Heart right ventricle (tissue), 16 donors: ENCODE measurements at regions of chr7 and their contacts with region 1.

Region 1: GRCh38 chr7:131556052-131556908 is at the start of gene PODXL:
- DNase-seq: peak; percentile 71 to 86
- ATAC-seq: peak; percentile 66 to 89 (median 82)
- H3K4me3 ChIP-seq: peak within 1 kb of the TSS; percentile 64 to 95 (median 83)
- H3K27ac ChIP-seq: peak within 1 kb of the TSS; percentile 70 to 98 (median 92)
- H3K4me1 ChIP-seq: peaks cover 6 to 69% (median 32%) of the 10 kb centered on the region in 9 donors
- H3K27me3 ChIP-seq: peaks cover 0 to 50% (median 0%) of the 10 kb centered on the region in 7 donors
- CTCF ChIP-seq: peak in 5 of 9 donors; percentile 7 to 34 (median 14)
- total RNA-seq, gene PODXL: 43.7 to 162 (median 71.0) TPM

Region 2: DNA sequence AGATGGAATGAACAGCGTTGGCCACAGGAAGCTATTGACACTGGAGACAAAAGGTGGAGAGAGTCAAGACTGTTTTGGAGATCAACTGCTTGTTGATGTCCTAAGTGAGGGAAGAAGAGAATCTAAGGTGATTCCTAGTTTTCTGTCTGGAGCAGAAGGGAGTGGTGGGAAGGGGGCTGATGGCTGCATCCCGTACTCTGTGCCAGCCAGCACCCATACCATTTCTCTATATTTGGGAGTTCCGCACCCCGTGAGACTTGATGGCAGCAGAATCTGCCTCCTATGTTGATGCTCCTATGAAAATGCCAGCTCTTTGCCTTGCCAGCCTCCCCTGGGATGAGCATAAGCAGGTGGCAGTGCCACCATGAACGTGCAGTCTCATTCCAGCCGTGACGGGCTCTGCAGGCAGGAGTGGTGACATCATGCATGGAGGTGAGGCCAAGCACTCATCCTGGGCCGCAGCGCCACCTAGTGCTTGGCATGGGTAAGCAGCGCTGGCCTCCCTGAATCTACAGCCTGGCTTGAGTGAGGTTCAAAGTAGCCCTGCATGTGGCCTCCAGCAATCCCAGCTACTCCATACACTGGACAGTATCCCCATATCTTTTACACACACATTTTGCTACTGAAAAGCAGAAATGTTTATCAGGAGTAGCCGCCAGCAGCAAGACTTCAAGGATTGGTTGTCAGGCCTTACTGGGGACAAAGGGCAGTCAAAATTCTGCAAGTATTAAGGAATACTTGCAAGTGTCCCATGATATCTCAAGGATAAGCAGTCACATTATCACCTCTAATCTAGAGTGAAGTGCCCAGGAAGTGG is 42.8 kb before region 1 on chr7:
- intact Hi-C with region 1: loop called in 2 of 10 experiments (anchors 5 kb)
- DNase-seq: peak; percentile 85 to 86
- ATAC-seq: peak; percentile 85 to 93 (median 91)
- H3K4me3 ChIP-seq: no peak overlapping the region
- H3K27ac ChIP-seq: peak overlapping the region in 9 of 10 donors; percentile 3 to 82 (median 50)
- H3K4me1 ChIP-seq: peaks cover 13 to 81% (median 46%) of the 10 kb centered on the region in 9 donors
- H3K27me3 ChIP-seq: no peaks in the 10 kb centered on the region
- CTCF ChIP-seq: peak; percentile 85 to 99 (median 96)

Region 3: DNA sequence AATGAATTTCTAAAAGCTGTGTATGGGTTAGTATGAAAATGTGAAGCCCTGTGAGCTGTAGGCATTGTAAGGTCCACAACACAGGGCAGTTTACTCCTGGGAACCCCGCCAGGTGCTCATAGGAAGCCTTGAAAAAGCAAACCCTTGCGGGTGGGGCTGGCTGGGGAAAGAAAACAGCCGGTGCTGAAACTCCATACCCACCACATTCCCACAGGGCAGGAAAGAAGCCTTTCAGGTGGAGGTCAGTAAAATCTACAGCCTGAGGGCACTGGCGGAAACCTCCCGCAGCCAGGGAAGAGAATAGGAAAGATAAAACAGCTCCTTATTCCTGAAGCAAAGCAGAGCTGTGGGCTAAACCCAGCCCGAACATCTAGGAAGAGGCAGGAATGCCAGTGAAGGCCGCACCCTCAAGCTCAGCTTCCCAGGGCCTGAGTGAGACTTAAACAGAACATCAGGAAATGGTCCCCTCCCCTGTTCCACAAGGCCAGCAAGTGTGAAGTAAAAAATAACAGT is 34.6 kb before region 1 on chr7:
- intact Hi-C with region 1: loop called in 1 of 10 experiments (anchors 5 kb)
- DNase-seq: peak; percentile 56 to 66
- ATAC-seq: peak; percentile 48 to 78 (median 66)
- H3K4me3 ChIP-seq: peak overlapping the region in 4 of 10 donors; percentile 20 to 21 (median 20)
- H3K27ac ChIP-seq: peak overlapping the region; percentile 65 to 89 (median 73)
- H3K4me1 ChIP-seq: peaks cover 4 to 98% (median 49%) of the 10 kb centered on the region in 9 donors
- H3K27me3 ChIP-seq: no peaks in the 10 kb centered on the region
- CTCF ChIP-seq: no peak

Region 4: DNA sequence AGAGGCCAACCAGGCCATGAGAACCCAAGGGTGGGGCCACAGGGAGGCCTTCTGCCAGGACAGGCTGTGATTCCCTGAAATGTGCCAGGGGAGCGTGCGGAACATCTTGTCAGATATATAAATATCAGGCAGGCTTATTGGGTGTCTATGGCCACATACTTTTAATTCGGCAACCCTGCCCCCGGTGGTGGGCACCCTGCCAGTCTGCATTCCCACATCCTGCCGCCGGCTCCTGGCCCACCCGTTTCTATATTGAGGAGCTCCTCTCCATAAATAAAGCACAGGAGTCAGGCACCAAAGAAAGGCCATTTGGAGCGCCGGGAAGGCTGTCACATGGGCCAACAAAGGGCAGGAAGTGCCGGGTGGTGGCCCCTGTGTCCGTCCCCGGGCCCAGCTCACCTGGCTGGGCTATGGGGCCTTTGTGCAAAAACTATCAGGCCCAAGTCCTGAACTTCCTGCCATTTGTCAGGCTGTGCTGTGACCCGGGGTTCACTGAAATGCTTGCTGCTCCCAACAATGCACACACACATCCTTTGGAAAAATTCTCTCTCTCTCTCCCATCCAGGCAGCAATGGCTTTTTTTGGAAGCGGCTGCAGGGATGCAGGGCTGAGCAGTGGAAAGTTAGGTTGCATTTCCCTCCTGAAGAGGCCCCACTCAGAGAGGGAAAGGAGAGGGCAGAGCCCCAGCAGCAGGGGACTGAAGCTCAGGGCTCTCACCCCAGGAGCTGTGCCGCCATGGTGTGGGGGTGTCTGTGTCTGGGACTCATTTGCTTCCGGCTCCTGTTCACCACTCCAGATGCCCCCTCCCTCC is 25.2 kb after region 1 on chr7:
- intact Hi-C with region 1: loop called in 3 of 10 experiments (anchors 1 to 2 kb)
- DNase-seq: peak; percentile 83 to 84
- ATAC-seq: peak; percentile 78 to 94 (median 91)
- H3K4me3 ChIP-seq: no peak overlapping the region
- H3K27ac ChIP-seq: peak overlapping the region; percentile 68 to 91 (median 86)
- H3K4me1 ChIP-seq: peaks cover 4 to 38% (median 28%) of the 10 kb centered on the region in 9 donors
- H3K27me3 ChIP-seq: no peaks in the 10 kb centered on the region
- CTCF ChIP-seq: peak in 8 of 9 donors; percentile 4 to 48 (median 24)

Region 5: GRCh38 chr7:131625817-131626372 is 69.6 kb after region 1 on chr7:
- intact Hi-C with region 1: loop called in 2 of 10 experiments (anchors 2 to 5 kb)
- DNase-seq: peak; percentile 53 to 73
- ATAC-seq: peak; percentile 23 to 64 (median 44)
- H3K4me3 ChIP-seq: no peak overlapping the region
- H3K27ac ChIP-seq: peak overlapping the region in 9 of 10 donors; percentile 56 to 87 (median 68)
- H3K4me1 ChIP-seq: peaks cover 38 to 100% (median 77%) of the 10 kb centered on the region in 9 donors
- H3K27me3 ChIP-seq: no peaks in the 10 kb centered on the region
- CTCF ChIP-seq: peak in 3 of 9 donors; percentile 7 to 17 (median 12)

Region 6: DNA sequence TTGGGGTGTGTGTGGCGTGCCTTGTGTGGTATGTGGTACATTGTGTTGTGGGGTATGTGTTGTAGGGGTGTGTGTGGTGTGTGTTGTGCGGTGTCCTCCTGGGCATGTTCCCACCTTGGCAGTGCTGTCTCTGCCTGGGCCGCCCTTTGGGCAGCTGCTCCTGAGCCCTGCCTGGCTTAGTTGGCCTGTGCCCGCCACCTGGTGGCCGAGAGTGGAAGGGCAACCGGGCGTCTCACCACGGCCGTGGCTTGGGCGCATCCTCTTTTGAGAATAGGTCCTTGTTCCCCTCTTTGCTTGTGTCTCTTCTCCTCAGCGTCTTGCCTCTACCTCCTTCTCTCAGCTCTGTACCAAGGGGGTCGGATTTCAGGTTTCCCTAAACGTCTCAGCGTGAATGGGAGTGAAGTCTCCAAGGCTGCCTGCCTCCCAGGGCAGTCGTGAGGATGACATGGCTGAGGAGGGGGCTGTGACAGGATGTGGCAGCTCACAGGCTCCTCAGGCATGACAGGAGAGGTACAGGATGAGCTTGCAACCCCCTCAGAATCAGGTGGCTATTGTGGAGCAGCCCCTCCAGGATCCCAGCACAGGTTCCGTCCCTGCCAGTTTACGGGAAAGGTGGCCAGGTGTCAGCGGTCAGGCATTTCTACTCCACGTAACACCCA is 98.5 kb after region 1 on chr7:
- intact Hi-C with region 1: loop called in 3 of 10 experiments (anchors 5 kb)
- DNase-seq: peak; percentile 84 to 91
- ATAC-seq: peak; percentile 81 to 90 (median 89)
- H3K4me3 ChIP-seq: no peak overlapping the region
- H3K27ac ChIP-seq: peak overlapping the region in 1 of 10 donors; percentile 39
- H3K4me1 ChIP-seq: peaks cover 0 to 40% (median 11%) of the 10 kb centered on the region in 9 donors
- H3K27me3 ChIP-seq: no peaks in the 10 kb centered on the region
- CTCF ChIP-seq: peak; percentile 86 to 94 (median 90)